ENCODE measurements at regions of chr14 and their contacts with region 1.

Region 1: GRCh38 chr14:64503478-64504309 is at the start of gene ZBTB25:
- DNase-seq: peak; percentile 83 to 93
- ATAC-seq: peak; percentile 39 to 47
- H3K4me3 ChIP-seq: peak within 1 kb of the TSS; percentile 75 to 94 (median 86)
- H3K27ac ChIP-seq: peak within 1 kb of the TSS; percentile 97 to 99 (median 98)
- H3K4me1 ChIP-seq: peaks cover 56 to 59% of the 10 kb centered on the region in 2 donors
- H3K27me3 ChIP-seq: no peaks in the 10 kb centered on the region
- CTCF ChIP-seq: peak in 1 of 5 experiments; percentile 10
- POLR2A ChIP-seq: peak; percentile 93 to 94
- total RNA-seq, gene ZBTB25: 6.9 to 13.7 (median 10.4) TPM

Region 2: GRCh38 chr14:64117671-64118402 is 385.9 kb before region 1 on chr14:
- in situ Hi-C with region 1: no loop called
- intact Hi-C with region 1: loop called (anchors 5 kb)
- DNase-seq: peak; percentile 84 to 90
- ATAC-seq: peak; percentile 71 to 79
- H3K4me3 ChIP-seq: no peak overlapping the region
- H3K27ac ChIP-seq: peak overlapping the region; percentile 89 to 94 (median 92)
- H3K4me1 ChIP-seq: peaks cover 34 to 61% of the 10 kb centered on the region in 2 donors
- H3K27me3 ChIP-seq: no peaks in the 10 kb centered on the region
- CTCF ChIP-seq: no peak
- POLR2A ChIP-seq: no peak

Region 3: DNA sequence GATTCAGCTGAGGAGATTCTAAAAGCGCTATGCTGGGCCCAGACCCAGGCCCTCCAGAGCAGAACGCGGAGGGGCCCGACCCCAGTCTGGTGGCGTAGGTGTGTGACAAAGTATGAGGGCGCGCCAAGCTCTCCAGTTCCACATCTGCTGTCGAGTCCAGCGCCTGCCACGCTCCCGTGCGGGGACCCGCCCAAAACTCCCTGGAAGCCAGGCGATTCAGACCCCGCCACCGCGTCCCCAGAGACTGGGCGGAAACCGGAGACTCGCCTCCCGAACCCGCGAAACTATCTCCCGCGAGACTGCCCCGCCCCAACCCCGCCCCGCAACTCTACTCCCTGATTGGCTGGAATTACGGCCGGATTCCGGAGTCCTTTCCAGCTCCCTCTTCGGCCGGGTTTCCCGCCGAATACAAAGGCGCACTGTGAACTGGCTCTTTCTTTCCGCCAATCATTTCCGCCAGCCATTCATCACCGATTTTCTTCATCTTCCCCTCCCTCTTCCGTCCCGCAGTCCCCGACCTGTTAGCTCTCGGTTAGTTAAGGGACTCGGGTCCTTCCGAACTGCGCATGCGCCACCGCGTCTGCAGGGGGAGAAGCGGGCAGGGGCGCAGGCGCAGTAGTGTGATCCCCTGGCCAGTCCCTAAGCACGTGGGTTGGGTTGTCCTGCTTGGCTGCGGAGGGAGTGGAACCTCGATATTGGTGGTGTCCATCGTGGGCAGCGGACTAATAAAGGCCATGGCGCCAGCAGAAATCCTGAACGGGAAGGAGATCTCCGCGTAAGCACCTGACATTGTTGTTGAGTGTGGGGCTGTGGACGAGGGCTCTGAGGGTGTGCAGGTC is 115.8 kb before region 1 on chr14 and contains the start of gene MTHFD1:
- in situ Hi-C with region 1: no loop called
- intact Hi-C with region 1: loop called (anchors 2 kb)
- DNase-seq: peak; percentile 99 to 100
- ATAC-seq: peak; percentile 94 to 96
- H3K4me3 ChIP-seq: peak within 1 kb of the TSS; percentile 69 to 82 (median 78)
- H3K27ac ChIP-seq: peak within 1 kb of the TSS; percentile 90 to 96 (median 92)
- H3K4me1 ChIP-seq: peaks cover 16 to 29% of the 10 kb centered on the region in 2 donors
- H3K27me3 ChIP-seq: no peaks in the 10 kb centered on the region
- CTCF ChIP-seq: no peak
- POLR2A ChIP-seq: peak; percentile 54 to 60
- total RNA-seq, gene MTHFD1: 36.2 to 68.7 (median 42.0) TPM

Region 4: GRCh38 chr14:64549781-64550620 is 46.3 kb after region 1 on chr14 and contains the start of gene PPP1R36:
- in situ Hi-C with region 1: no loop called
- intact Hi-C with region 1: no loop called
- DNase-seq: no peak
- ATAC-seq: peak; percentile 33 to 76
- H3K4me3 ChIP-seq: peak within 1 kb of the TSS; percentile 41 to 49 (median 46)
- H3K27ac ChIP-seq: peak within 1 kb of the TSS in 1 of 4 donors; percentile 15
- H3K4me1 ChIP-seq: peaks cover 6 to 9% of the 10 kb centered on the region in 2 donors
- H3K27me3 ChIP-seq: no peaks in the 10 kb centered on the region
- CTCF ChIP-seq: no peak
- POLR2A ChIP-seq: no peak
- total RNA-seq, gene PPP1R36: 0.31 to 2.4 (median 0.55) TPM in 3 of 4 donors, not detected in the other

Region 5: DNA sequence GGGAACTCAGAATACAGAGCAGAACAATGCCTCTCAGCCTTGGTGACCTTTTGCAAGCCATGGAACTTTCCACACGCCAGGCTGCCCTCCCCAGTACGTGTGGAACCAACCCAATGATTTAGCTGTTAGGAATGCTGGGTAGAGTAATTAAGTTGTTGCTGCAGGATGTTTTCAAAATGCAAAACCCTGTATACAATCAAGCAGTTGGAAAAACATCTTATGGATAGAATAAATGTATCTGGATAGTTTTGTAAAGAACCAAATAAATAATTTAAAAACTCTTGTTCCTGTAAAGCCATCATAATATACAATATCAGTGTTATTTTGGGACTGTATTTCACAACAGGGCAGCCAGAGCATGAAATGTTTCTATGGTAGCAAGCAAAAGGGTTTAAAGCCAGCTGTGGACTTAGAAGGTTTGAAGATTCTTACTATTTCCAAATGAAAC is 65.5 kb after region 1 on chr14:
- in situ Hi-C with region 1: no loop called
- intact Hi-C with region 1: loop called (anchors 5 kb)
- DNase-seq: peak; percentile 70 to 85
- ATAC-seq: peak; percentile 93 to 94
- H3K4me3 ChIP-seq: no peak overlapping the region
- H3K27ac ChIP-seq: peak overlapping the region; percentile 76 to 92 (median 85)
- H3K4me1 ChIP-seq: peaks cover 51 to 65% of the 10 kb centered on the region in 2 donors
- H3K27me3 ChIP-seq: no peaks in the 10 kb centered on the region
- CTCF ChIP-seq: no peak
- POLR2A ChIP-seq: no peak

Region 6: GRCh38 chr14:65032319-65032718 is 528.6 kb after region 1 on chr14:
- in situ Hi-C with region 1: no loop called
- intact Hi-C with region 1: loop called (anchors 5 kb)
- DNase-seq: peak; percentile 91 to 92
- ATAC-seq: peak; percentile 97 to 98
- H3K4me3 ChIP-seq: peak overlapping the region; percentile 23 to 39 (median 33)
- H3K27ac ChIP-seq: peak overlapping the region; percentile 80 to 89 (median 86)
- H3K4me1 ChIP-seq: peaks cover 12 to 16% of the 10 kb centered on the region in 2 donors
- H3K27me3 ChIP-seq: no peaks in the 10 kb centered on the region
- CTCF ChIP-seq: no peak
- POLR2A ChIP-seq: peak; percentile 51 to 54